Activated CD4-positive, alpha-beta T cell treated with anti-CD3 and anti-CD28 coated beads for 36 hours (primary cell): ENCODE measurements at regions of chr2 and their contacts with region 1.

Region 1: DNA sequence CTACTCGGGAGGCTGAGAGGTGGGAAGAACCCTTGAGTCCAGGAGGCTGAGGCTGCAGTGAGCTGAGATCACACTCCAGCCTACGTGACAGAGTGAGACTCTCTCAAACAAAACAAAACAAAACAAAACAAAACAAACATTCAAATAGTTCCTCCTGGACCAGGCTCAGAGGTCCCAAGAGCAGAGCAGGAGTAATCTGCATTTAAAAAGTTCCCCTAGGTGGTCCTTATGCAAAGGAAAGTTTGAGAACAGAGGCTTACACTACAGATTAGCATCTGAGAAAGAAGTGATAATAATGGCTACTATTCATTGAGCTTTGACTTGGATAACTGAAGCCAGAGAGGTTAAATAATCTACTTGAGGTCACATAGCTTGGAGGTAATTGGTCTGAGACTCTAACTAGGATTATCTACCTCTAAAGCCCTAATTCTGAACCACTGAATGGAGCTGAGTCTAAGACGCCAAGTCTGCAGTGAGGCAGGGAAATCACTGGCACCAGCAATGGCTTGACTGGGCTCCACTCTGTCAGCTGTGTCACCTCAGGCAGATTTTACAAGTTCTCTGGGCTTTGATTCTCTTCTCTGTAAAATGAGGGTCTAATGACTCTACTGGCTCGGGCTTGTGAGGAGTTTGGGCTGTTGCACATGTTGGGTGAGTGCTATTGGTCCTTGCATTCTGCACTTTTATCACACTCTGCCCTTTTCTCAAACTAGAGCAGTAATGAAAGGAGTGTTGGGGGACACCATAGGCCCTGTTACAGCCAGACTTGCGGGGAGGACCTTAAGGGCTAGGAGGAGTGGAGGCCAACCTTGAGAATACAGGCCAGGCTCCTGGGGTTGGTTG is 29.2 kb upstream of the DLX2 start:
- DNase-seq: no peak
- ATAC-seq: no peak
- H3K4me3 Mint-ChIP-seq: no peak overlapping the region
- H3K27ac Mint-ChIP-seq: no peak overlapping the region
- H3K4me1 Mint-ChIP-seq: no peaks in the 10 kb centered on the region
- H3K27me3 Mint-ChIP-seq: peaks cover 2% of the 10 kb centered on the region

Region 2: DNA sequence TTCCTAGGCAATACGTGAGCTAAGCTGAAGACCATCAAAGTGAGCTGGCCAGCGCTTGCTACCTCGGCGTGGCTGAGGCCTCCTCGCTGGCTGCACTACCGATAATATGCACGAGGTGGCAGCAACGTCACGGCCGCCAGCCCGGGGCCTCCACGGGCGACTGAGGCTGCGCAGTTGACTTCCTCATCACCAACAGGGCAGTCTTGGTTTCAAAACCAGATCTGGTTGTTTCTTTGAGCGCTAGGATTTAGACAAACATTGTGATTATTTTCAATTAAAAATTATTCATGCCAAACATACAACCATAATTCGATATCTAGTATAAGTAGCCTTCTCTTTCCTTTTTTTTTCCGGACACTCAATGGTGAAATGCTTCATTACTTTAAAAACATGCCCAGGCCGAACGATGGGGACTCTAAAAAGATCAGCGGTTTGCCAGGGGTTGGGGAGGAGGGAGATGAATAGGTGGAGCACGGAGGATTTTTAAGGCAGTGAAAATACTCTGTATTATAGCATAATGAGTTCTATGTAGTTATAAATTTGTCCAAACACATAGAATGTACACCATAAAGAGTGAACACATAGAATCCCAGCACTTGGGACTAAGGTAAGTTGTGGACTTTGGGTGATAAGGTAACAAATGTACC is 557.7 kb before region 1 on chr2:
- CTCF ChIA-PET with region 1: interaction called, 15 read pairs
- POLR2A ChIA-PET with region 1: no interaction called
- intact Hi-C with region 1: loop called in 1 of 2 experiments (anchors 2 kb)
- DNase-seq: peak; percentile 91
- ATAC-seq: peak; percentile 100
- H3K4me3 Mint-ChIP-seq: no peak overlapping the region
- H3K27ac Mint-ChIP-seq: no peak overlapping the region
- H3K4me1 Mint-ChIP-seq: peaks cover 6% of the 10 kb centered on the region
- H3K27me3 Mint-ChIP-seq: no peaks in the 10 kb centered on the region

Region 3: GRCh38 chr2:171703574-171704347 is 428.2 kb before region 1 on chr2:
- CTCF ChIA-PET with region 1: interaction called, 12 read pairs
- POLR2A ChIA-PET with region 1: interaction called, 7 read pairs
- intact Hi-C with region 1: loop called (anchors 1 to 2 kb)
- DNase-seq: no peak
- ATAC-seq: no peak
- H3K4me3 Mint-ChIP-seq: no peak overlapping the region
- H3K27ac Mint-ChIP-seq: no peak overlapping the region
- H3K4me1 Mint-ChIP-seq: peaks cover 8% of the 10 kb centered on the region
- H3K27me3 Mint-ChIP-seq: no peaks in the 10 kb centered on the region

Region 4: DNA sequence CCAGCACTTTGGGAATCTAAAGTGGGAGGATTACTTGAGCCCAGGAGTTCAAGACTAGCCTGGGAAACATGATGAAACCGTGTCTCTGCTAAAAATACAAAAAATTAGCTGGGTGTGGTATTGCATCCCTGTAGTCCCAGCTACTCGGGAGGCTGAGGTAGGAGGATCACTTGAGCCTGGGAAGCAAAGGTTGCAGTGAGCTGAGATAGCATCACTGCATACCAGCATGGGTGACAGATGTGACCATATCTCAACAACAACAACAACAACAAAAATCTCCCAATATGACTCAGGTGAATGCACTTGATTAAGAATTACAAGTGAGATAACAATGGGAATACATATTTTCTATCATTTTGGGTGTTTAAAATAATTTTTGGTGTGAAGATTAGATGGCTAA is 131.8 kb after region 1 on chr2:
- CTCF ChIA-PET with region 1: no interaction called
- POLR2A ChIA-PET with region 1: no interaction called
- intact Hi-C with region 1: no loop called
- DNase-seq: no peak
- ATAC-seq: no peak
- H3K4me3 Mint-ChIP-seq: no peak overlapping the region
- H3K27ac Mint-ChIP-seq: no peak overlapping the region
- H3K4me1 Mint-ChIP-seq: no peaks in the 10 kb centered on the region
- H3K27me3 Mint-ChIP-seq: no peaks in the 10 kb centered on the region